ENCODE measurements at regions of chr4 and their contacts with region 1.

Region 1: GRCh38 chr4:147463065-147463464 is 17.8 kb upstream of the EDNRA start:
- DNase-seq: no peak
- H3K4me3 ChIP-seq: no peak overlapping the region
- H3K27ac ChIP-seq: peak overlapping the region; percentile 88 to 95
- H3K4me1 ChIP-seq: peaks cover 3 to 10% of the 10 kb centered on the region in 2 donors
- H3K27me3 ChIP-seq: no peaks in the 10 kb centered on the region
- CTCF ChIP-seq: no peak

Region 2: DNA sequence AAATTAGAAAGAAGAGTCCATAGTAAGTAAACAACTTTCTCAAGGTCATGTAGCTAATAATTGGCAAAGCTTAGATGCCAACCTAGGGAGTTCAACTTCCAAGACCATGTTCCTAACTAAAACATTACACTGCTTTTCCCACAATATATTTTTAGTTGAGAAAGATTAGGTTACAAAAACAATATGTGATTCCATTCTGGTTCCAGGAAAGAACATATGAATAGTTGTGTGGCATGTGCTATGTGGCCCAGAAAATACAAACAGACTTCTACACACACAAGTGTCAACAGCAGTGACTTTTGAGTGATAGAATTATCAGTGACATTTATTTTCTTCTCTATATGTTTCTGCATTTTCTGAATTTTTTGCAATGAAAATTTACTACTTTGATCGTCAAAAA is 44.8 kb before region 1 on chr4:
- intact Hi-C with region 1: loop called (anchors 2 kb)
- DNase-seq: no peak
- H3K4me3 ChIP-seq: no peak overlapping the region
- H3K27ac ChIP-seq: peak overlapping the region in 1 of 2 donors; percentile 33
- H3K4me1 ChIP-seq: no peaks in the 10 kb centered on the region
- H3K27me3 ChIP-seq: no peaks in the 10 kb centered on the region
- CTCF ChIP-seq: no peak